Naive thymus-derived CD4-positive, alpha-beta T cell (primary cell): ENCODE measurements at regions of chr4 and their contacts with region 1.

Region 1: GRCh38 chr4:78775303-78776030 is 683 bp upstream of the BMP2K start:
- DNase-seq: peak; percentile 80 to 93 (median 91)
- ATAC-seq: peak; percentile 81
- H3K4me3 ChIP-seq: peak overlapping the region; percentile 87
- H3K4me3 Mint-ChIP-seq: peak overlapping the region; percentile 88 to 97 (median 96)
- H3K27ac ChIP-seq: peak overlapping the region; percentile 78
- H3K27ac Mint-ChIP-seq: peak overlapping the region; percentile 84 to 98 (median 95)
- H3K4me1 ChIP-seq: peaks cover 4 to 14% of the 10 kb centered on the region in 2 donors
- H3K4me1 Mint-ChIP-seq: peaks cover 7 to 34% (median 13%) of the 10 kb centered on the region in 7 donors
- H3K27me3 ChIP-seq: no peaks in the 10 kb centered on the region
- H3K27me3 Mint-ChIP-seq: no peaks in the 10 kb centered on the region

Region 2: DNA sequence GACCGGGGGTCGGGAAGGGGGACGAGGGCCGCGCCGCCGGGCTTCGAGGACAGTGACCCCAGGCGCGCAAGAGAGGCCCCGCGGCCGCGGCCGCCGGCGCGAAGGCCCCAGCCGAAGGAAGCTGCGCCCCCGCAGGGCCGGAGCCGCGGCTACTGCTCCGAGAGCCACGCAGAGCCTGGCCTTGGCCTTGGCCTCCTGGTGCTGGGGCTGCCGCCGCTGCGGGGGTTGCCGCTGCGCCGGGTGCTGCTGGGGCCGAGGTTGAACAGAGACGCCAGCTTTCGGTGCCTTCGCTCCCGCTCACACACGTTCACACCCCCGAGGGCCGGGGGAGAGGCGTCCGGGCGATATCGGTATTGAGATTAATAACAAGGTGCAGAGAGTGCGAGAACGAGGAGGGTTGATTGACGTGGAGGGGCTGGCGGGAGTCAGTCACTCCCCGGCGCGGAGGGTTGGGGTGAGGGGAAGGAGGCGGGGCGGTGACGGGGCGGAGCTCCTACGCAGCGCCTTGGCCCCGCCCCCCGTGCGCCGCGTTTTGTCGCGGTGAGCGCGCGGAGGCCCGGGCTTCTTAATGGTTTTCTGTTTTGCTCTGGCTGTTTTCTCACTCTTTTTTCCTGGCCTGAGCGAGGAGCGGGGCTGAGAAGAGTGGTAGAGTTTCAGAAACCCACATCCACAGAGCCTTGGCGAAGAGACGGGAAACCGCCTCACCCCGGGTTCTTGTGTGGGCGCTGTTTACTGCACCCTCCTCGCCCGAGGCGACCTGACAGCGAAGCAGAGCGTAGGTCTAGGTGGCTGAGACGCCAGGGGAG is 955.4 kb before region 1 on chr4:
- CTCF ChIA-PET with region 1: no interaction called
- POLR2A ChIA-PET with region 1: no interaction called
- intact Hi-C with region 1: loop called (anchors 2 to 5 kb)
- DNase-seq: peak; percentile 95 to 99 (median 98)
- ATAC-seq: peak; percentile 87
- H3K4me3 ChIP-seq: peak overlapping the region; percentile 93
- H3K4me3 Mint-ChIP-seq: peak overlapping the region; percentile 93 to 99 (median 96)
- H3K27ac ChIP-seq: peak overlapping the region; percentile 100
- H3K27ac Mint-ChIP-seq: peak overlapping the region; percentile 88 to 100 (median 99)
- H3K4me1 ChIP-seq: peaks cover 39 to 42% of the 10 kb centered on the region in 2 donors
- H3K4me1 Mint-ChIP-seq: peaks cover 37 to 69% (median 53%) of the 10 kb centered on the region in 7 donors
- H3K27me3 ChIP-seq: no peaks in the 10 kb centered on the region
- H3K27me3 Mint-ChIP-seq: peaks cover 0 to 2% (median 0%) of the 10 kb centered on the region in 5 donors

Region 3: DNA sequence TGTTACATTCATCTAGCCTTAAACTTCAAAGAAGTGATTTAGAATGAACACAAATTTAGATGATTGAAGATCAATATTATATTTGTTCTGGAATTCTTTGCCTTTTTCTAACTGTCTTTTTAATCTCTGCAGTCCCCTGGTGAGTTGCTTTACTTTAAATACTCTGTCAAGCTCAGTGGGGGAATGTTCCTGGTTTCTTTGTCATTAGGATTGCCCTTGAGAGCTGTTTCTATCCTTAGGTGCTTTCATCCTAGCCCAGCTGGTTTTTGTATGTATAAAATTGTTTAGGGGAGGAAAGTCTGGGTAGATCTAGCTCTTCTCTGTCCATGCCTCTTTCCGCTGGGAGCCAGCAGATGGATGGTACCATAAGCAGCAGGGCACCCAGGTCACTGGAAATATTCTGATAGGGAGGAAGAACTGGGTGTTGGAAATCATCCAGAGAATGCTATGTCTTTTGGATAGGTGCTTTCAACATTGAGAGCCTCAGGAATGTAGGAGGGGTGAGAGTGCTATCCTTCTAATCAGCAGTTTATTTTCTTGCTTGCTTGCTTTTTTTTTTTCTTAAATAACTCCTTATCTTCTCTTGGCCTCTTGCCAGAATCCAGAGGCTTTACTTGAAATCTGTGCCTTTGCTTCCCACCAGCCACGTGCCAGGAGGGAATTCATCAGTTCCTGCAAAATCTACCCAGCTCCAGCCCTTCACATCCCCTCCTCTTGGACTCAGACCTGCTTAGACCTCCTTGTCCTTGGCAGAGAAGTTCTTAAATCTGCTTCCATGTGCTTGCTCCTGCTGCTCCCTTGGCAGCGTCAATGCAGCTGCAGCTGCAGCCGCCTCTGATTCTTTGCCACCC is 439.1 kb before region 1 on chr4:
- CTCF ChIA-PET with region 1: no interaction called
- POLR2A ChIA-PET with region 1: no interaction called
- intact Hi-C with region 1: no loop called
- DNase-seq: no peak
- ATAC-seq: no peak
- H3K4me3 ChIP-seq: no peak overlapping the region
- H3K4me3 Mint-ChIP-seq: no peak overlapping the region
- H3K27ac ChIP-seq: no peak overlapping the region
- H3K27ac Mint-ChIP-seq: no peak overlapping the region
- H3K4me1 ChIP-seq: no peaks in the 10 kb centered on the region
- H3K4me1 Mint-ChIP-seq: no peaks in the 10 kb centered on the region
- H3K27me3 ChIP-seq: no peaks in the 10 kb centered on the region
- H3K27me3 Mint-ChIP-seq: peaks cover 12 to 39% (median 20%) of the 10 kb centered on the region in 5 donors

Region 4: GRCh38 chr4:78612398-78613178 is 162.9 kb before region 1 on chr4:
- CTCF ChIA-PET with region 1: no interaction called
- POLR2A ChIA-PET with region 1: no interaction called
- intact Hi-C with region 1: loop called (anchors 1 to 2 kb)
- DNase-seq: no peak
- ATAC-seq: peak; percentile 47
- H3K4me3 ChIP-seq: no peak overlapping the region
- H3K4me3 Mint-ChIP-seq: peak overlapping the region in 1 of 10 donors; percentile 39
- H3K27ac ChIP-seq: no peak overlapping the region
- H3K27ac Mint-ChIP-seq: peak overlapping the region in 4 of 9 donors; percentile 16 to 66 (median 57)
- H3K4me1 ChIP-seq: peaks cover 0 to 36% of the 10 kb centered on the region in 2 donors
- H3K4me1 Mint-ChIP-seq: peaks cover 13 to 76% (median 55%) of the 10 kb centered on the region in 7 donors
- H3K27me3 ChIP-seq: no peaks in the 10 kb centered on the region
- H3K27me3 Mint-ChIP-seq: no peaks in the 10 kb centered on the region

Region 5: DNA sequence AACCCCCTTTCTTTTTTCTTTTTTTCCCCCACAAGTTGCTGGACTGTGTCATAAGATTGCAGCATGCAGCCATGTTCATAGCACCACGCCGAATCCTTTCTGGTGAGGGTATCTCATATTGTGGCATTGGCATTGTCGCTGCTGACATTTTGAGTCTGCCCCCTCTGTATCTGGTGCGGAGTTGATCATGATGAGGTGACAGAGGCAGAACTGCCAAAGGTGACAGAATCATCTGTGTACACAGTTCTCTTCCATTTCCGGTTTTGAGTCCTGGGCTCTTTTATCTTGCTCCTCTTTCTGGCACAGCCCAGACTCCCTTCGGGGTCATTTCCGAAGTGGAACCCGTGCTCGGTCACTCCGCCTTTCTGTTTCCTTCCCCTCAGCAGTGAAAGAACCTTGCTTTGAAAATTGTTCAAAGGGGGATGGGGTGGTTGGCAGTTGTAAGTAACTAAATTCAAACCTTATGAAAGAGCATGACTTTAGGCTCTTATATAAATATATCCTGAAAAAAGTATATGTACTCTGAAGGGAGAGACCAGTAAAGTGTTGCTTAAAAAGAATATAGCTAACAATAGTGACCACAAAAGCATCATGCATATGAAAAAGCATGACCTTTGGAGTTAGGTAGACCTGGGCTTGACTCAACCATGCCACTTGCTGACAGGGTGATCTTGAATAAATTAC is 54.3 kb before region 1 on chr4:
- CTCF ChIA-PET with region 1: no interaction called
- POLR2A ChIA-PET with region 1: no interaction called
- intact Hi-C with region 1: loop called (anchors 2 kb)
- DNase-seq: peak in 8 of 9 donors; percentile 11 to 38 (median 24)
- ATAC-seq: peak; percentile 68
- H3K4me3 ChIP-seq: peak overlapping the region; percentile 24
- H3K4me3 Mint-ChIP-seq: peak overlapping the region; percentile 43 to 79 (median 70)
- H3K27ac ChIP-seq: no peak overlapping the region
- H3K27ac Mint-ChIP-seq: peak overlapping the region in 8 of 9 donors; percentile 4 to 76 (median 48)
- H3K4me1 ChIP-seq: peaks cover 0 to 12% of the 10 kb centered on the region in 2 donors
- H3K4me1 Mint-ChIP-seq: peaks cover 7 to 21% (median 18%) of the 10 kb centered on the region in 7 donors
- H3K27me3 ChIP-seq: no peaks in the 10 kb centered on the region
- H3K27me3 Mint-ChIP-seq: peaks cover 0 to 2% (median 0%) of the 10 kb centered on the region in 5 donors

Region 6: DNA sequence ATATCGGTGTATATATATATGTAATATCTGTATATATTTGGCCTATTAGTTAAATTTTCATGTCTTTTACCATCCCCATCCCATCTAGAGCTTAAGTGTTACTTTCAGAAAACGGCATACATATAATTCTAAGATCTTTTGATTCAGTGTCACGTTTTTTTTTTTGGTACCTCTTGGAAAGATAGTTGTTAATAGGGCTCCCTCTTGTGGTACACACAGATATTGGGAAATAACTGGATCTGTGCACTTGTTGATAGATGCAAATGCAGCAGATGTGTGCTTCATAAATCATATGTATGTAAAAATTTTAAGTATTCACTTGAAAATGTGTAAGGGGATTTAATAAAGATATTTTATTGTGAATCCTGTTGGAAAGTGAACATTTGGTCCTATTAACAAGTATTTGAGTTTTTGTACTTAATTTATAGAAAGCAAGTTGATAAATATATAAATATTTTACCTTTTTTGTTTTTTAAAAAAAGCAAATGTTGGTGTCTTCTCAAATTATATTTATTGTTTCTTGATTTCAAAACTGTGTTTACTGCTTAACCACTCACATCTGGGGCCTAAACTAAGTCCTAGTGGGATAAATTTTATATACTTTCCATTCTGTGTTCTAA is 89.0 kb after region 1 on chr4:
- CTCF ChIA-PET with region 1: no interaction called
- POLR2A ChIA-PET with region 1: no interaction called
- intact Hi-C with region 1: loop called (anchors 1 to 5 kb)
- DNase-seq: peak in 7 of 9 donors; percentile 55 to 79 (median 70)
- ATAC-seq: peak; percentile 81
- H3K4me3 ChIP-seq: no peak overlapping the region
- H3K4me3 Mint-ChIP-seq: no peak overlapping the region
- H3K27ac ChIP-seq: no peak overlapping the region
- H3K27ac Mint-ChIP-seq: peak overlapping the region in 1 of 9 donors; percentile 33
- H3K4me1 ChIP-seq: no peaks in the 10 kb centered on the region
- H3K4me1 Mint-ChIP-seq: peaks cover 0 to 6% (median 4%) of the 10 kb centered on the region in 7 donors
- H3K27me3 ChIP-seq: no peaks in the 10 kb centered on the region
- H3K27me3 Mint-ChIP-seq: no peaks in the 10 kb centered on the region

Region 7: GRCh38 chr4:80202190-80202711 is 1426.8 kb after region 1 on chr4:
- CTCF ChIA-PET with region 1: no interaction called
- POLR2A ChIA-PET with region 1: no interaction called
- intact Hi-C with region 1: loop called in 1 of 2 experiments (anchors 5 kb)
- DNase-seq: peak; percentile 55 to 86 (median 70)
- ATAC-seq: peak; percentile 78
- H3K4me3 ChIP-seq: peak overlapping the region; percentile 63
- H3K4me3 Mint-ChIP-seq: peak overlapping the region; percentile 79 to 91 (median 84)
- H3K27ac ChIP-seq: peak overlapping the region; percentile 75
- H3K27ac Mint-ChIP-seq: peak overlapping the region in 8 of 9 donors; percentile 2 to 86 (median 76)
- H3K4me1 ChIP-seq: peaks cover 5 to 8% of the 10 kb centered on the region in 2 donors
- H3K4me1 Mint-ChIP-seq: peaks cover 18 to 30% (median 27%) of the 10 kb centered on the region in 7 donors
- H3K27me3 ChIP-seq: no peaks in the 10 kb centered on the region
- H3K27me3 Mint-ChIP-seq: peaks cover 12 to 53% (median 12%) of the 10 kb centered on the region in 5 donors